ENCODE measurements at regions of chr1 and their contacts with region 1.

Region 1: DNA sequence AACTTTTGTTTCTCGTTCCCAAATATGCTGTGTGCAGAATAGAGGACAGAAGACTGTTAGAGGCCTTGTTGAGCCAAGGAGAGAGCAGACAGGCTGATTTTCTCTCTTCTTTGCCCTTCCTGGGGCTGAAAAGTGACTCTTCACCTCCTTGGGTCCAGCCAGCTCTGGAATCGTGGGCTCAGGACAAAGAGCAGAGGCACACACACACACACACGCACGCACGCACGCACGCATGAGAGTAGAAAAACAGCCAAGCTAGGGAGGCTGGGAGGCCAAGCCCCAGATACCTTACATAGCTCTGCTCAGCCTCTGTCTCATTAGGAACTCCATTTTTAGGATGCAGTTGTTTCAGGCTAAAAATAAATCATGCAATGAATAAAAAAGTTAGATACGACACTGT is at the start of gene CASQ2:
- DNase-seq: no peak
- ATAC-seq: no peak
- H3K4me3 ChIP-seq: no peak within 1 kb of the TSS
- H3K27ac ChIP-seq: no peak within 1 kb of the TSS
- H3K4me1 ChIP-seq: peaks cover 9% of the 10 kb centered on the region
- H3K27me3 ChIP-seq: no peaks in the 10 kb centered on the region
- CTCF ChIP-seq: no peak
- POLR2A ChIP-seq: no peak
- total RNA-seq, gene CASQ2: 0.26 TPM in 1 of 2 donors, not detected in the other

Region 2: GRCh38 chr1:115530431-115530876 is 238.1 kb before region 1 on chr1:
- intact Hi-C with region 1: no loop called
- DNase-seq: no peak
- ATAC-seq: no peak
- H3K4me3 ChIP-seq: no peak overlapping the region
- H3K27ac ChIP-seq: no peak overlapping the region
- H3K4me1 ChIP-seq: no peaks in the 10 kb centered on the region
- H3K27me3 ChIP-seq: no peaks in the 10 kb centered on the region
- CTCF ChIP-seq: no peak
- POLR2A ChIP-seq: no peak

Region 3: DNA sequence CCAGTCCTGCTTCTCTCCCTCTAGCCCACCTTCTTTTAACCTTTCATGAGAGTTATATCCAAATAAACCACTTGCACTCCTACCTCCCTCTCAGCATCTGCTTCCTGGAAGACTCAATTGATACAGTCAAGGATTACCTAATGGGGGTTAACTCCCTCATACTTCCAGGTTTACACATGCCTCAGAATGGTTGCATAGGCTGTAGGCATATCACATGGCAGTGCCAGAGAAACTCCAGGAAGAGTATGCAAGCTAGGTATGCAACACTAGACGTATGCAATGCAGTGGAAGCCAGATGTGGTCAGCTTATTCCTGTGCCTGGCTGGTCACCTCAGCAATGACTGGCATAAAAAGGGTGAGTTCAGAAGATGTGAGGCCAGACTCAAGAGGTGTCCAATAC is 159.5 kb before region 1 on chr1:
- intact Hi-C with region 1: loop called (anchors 5 kb)
- DNase-seq: no peak
- ATAC-seq: no peak
- H3K4me3 ChIP-seq: no peak overlapping the region
- H3K27ac ChIP-seq: no peak overlapping the region
- H3K4me1 ChIP-seq: no peaks in the 10 kb centered on the region
- H3K27me3 ChIP-seq: no peaks in the 10 kb centered on the region
- CTCF ChIP-seq: no peak
- POLR2A ChIP-seq: no peak

Measured in body of pancreas (tissue), 4 donors.